ENCODE measurements at regions of chr19 and their contacts with region 1.

Region 1: GRCh38 chr19:20776083-20777076 is at the start of gene ZNF66:
- DNase-seq: peak; percentile 90 to 98 (median 93)
- ATAC-seq: peak; percentile 97
- H3K4me3 ChIP-seq: peak within 1 kb of the TSS; percentile 85
- H3K4me3 Mint-ChIP-seq: peak within 1 kb of the TSS; percentile 97
- H3K27ac ChIP-seq: peak within 1 kb of the TSS; percentile 70 to 74
- H3K27ac Mint-ChIP-seq: peak within 1 kb of the TSS; percentile 91
- H3K4me1 ChIP-seq: peaks cover 6% of the 10 kb centered on the region
- H3K4me1 Mint-ChIP-seq: peaks cover 31% of the 10 kb centered on the region
- H3K27me3 ChIP-seq: no peaks in the 10 kb centered on the region
- H3K27me3 Mint-ChIP-seq: no peaks in the 10 kb centered on the region
- CTCF ChIP-seq: no peak
- total RNA-seq, gene ZNF66: 6.4 to 7.4 TPM

Region 2: GRCh38 chr19:20051841-20052768 is 724.3 kb before region 1 on chr19:
- CTCF ChIA-PET with region 1: no interaction called
- POLR2A ChIA-PET with region 1: interaction called, 11 read pairs
- intact Hi-C with region 1: no loop called
- DNase-seq: peak; percentile 29 to 77 (median 50)
- ATAC-seq: peak; percentile 93
- H3K4me3 ChIP-seq: peak overlapping the region; percentile 95
- H3K4me3 Mint-ChIP-seq: peak overlapping the region; percentile 99
- H3K27ac ChIP-seq: peak overlapping the region; percentile 67 to 73
- H3K27ac Mint-ChIP-seq: peak overlapping the region; percentile 90
- H3K4me1 ChIP-seq: peaks cover 15% of the 10 kb centered on the region
- H3K4me1 Mint-ChIP-seq: peaks cover 18% of the 10 kb centered on the region
- H3K27me3 ChIP-seq: no peaks in the 10 kb centered on the region
- H3K27me3 Mint-ChIP-seq: peaks cover 4% of the 10 kb centered on the region
- CTCF ChIP-seq: no peak

Region 3: GRCh38 chr19:20423381-20424197 is 352.8 kb before region 1 on chr19:
- CTCF ChIA-PET with region 1: no interaction called
- POLR2A ChIA-PET with region 1: interaction called, 26 read pairs
- intact Hi-C with region 1: loop called in 1 of 2 experiments (anchors 10 kb)
- DNase-seq: peak in 9 of 14 experiments; percentile 6 to 64 (median 34)
- ATAC-seq: no peak
- H3K4me3 ChIP-seq: peak overlapping the region; percentile 83
- H3K4me3 Mint-ChIP-seq: peak overlapping the region; percentile 97
- H3K27ac ChIP-seq: peak overlapping the region; percentile 57 to 65
- H3K27ac Mint-ChIP-seq: peak overlapping the region; percentile 90
- H3K4me1 ChIP-seq: peaks cover 9% of the 10 kb centered on the region
- H3K4me1 Mint-ChIP-seq: peaks cover 15% of the 10 kb centered on the region
- H3K27me3 ChIP-seq: no peaks in the 10 kb centered on the region
- H3K27me3 Mint-ChIP-seq: no peaks in the 10 kb centered on the region
- CTCF ChIP-seq: no peak

Region 4: GRCh38 chr19:21020298-21021227 is 244.2 kb after region 1 on chr19 and contains the start of gene ZNF430:
- CTCF ChIA-PET with region 1: no interaction called
- POLR2A ChIA-PET with region 1: interaction called, 27 read pairs
- intact Hi-C with region 1: loop called in 1 of 2 experiments (anchors 10 kb)
- DNase-seq: peak; percentile 82 to 98 (median 87)
- ATAC-seq: peak; percentile 95
- H3K4me3 ChIP-seq: peak within 1 kb of the TSS; percentile 98
- H3K4me3 Mint-ChIP-seq: peak within 1 kb of the TSS; percentile 98
- H3K27ac ChIP-seq: peak within 1 kb of the TSS; percentile 86 to 93
- H3K27ac Mint-ChIP-seq: peak within 1 kb of the TSS; percentile 100
- H3K4me1 ChIP-seq: peaks cover 29% of the 10 kb centered on the region
- H3K4me1 Mint-ChIP-seq: peaks cover 52% of the 10 kb centered on the region
- H3K27me3 ChIP-seq: no peaks in the 10 kb centered on the region
- H3K27me3 Mint-ChIP-seq: no peaks in the 10 kb centered on the region
- CTCF ChIP-seq: no peak
- total RNA-seq, gene ZNF430: 40.5 to 43.8 TPM

Region 5: GRCh38 chr19:21835810-21836444 is 1059.5 kb after region 1 on chr19 and contains the start of gene ZNF43:
- CTCF ChIA-PET with region 1: no interaction called
- POLR2A ChIA-PET with region 1: interaction called, 7 read pairs
- intact Hi-C with region 1: loop called in 1 of 2 experiments (anchors 10 kb)
- DNase-seq: peak; percentile 87 to 97 (median 91)
- ATAC-seq: peak; percentile 98
- H3K4me3 ChIP-seq: peak within 1 kb of the TSS; percentile 81
- H3K4me3 Mint-ChIP-seq: peak within 1 kb of the TSS; percentile 97
- H3K27ac ChIP-seq: peak within 1 kb of the TSS; percentile 82 to 83
- H3K27ac Mint-ChIP-seq: peak within 1 kb of the TSS; percentile 94
- H3K4me1 ChIP-seq: peaks cover 14% of the 10 kb centered on the region
- H3K4me1 Mint-ChIP-seq: peaks cover 33% of the 10 kb centered on the region
- H3K27me3 ChIP-seq: no peaks in the 10 kb centered on the region
- H3K27me3 Mint-ChIP-seq: no peaks in the 10 kb centered on the region
- CTCF ChIP-seq: no peak
- total RNA-seq, gene ZNF43: 26.1 to 30.2 TPM

Measured in CD4-positive, alpha-beta T cell (primary cell).